ENCODE measurements at regions of chr9 and their contacts with region 1.

Region 1: GRCh38 chr9:134738869-134739659 is 97.5 kb downstream of the COL5A1 start:
- DNase-seq: peak; percentile 57 to 73 (median 66)
- ATAC-seq: peak; percentile 62
- H3K4me3 ChIP-seq: no peak overlapping the region
- H3K27ac ChIP-seq: no peak overlapping the region
- H3K4me1 ChIP-seq: peaks cover 6% of the 10 kb centered on the region
- H3K27me3 ChIP-seq: no peaks in the 10 kb centered on the region
- CTCF ChIP-seq: peak; percentile 70 to 85 (median 79)
- POLR2A ChIP-seq: no peak

Region 2: GRCh38 chr9:134178768-134179551 is 560.1 kb before region 1 on chr9:
- intact Hi-C with region 1: loop called (anchors 10 kb)
- DNase-seq: peak; percentile 28 to 61 (median 52)
- ATAC-seq: peak; percentile 29
- H3K4me3 ChIP-seq: no peak overlapping the region
- H3K27ac ChIP-seq: no peak overlapping the region
- H3K4me1 ChIP-seq: peaks cover 9% of the 10 kb centered on the region
- H3K27me3 ChIP-seq: no peaks in the 10 kb centered on the region
- CTCF ChIP-seq: no peak
- POLR2A ChIP-seq: no peak

Region 3: GRCh38 chr9:134698587-134699342 is 40.3 kb before region 1 on chr9:
- intact Hi-C with region 1: loop called (anchors 5 kb)
- DNase-seq: peak; percentile 61 to 73 (median 72)
- ATAC-seq: peak; percentile 75
- H3K4me3 ChIP-seq: no peak overlapping the region
- H3K27ac ChIP-seq: no peak overlapping the region
- H3K4me1 ChIP-seq: peaks cover 10% of the 10 kb centered on the region
- H3K27me3 ChIP-seq: no peaks in the 10 kb centered on the region
- CTCF ChIP-seq: peak; percentile 79 to 93 (median 86)
- POLR2A ChIP-seq: no peak

Measured in body of pancreas (tissue), 4 donors.